Activated CD8-positive, alpha-beta memory T cell treated with anti-CD3 and anti-CD28 coated beads, Interleukin-2, amount 10 ng/mL, durations not matched to agents 7 days and 5 days (primary cell): ENCODE measurements at regions of chr18 and their contacts with region 1.

Region 1: GRCh38 chr18:11995445-11996189 is 14.3 kb downstream of the IMPA2 start:
- DNase-seq: peak; percentile 68
- ATAC-seq: peak; percentile 89
- H3K4me3 Mint-ChIP-seq: peak overlapping the region; percentile 22
- H3K27ac Mint-ChIP-seq: peak overlapping the region; percentile 39
- H3K4me1 Mint-ChIP-seq: peaks cover 23% of the 10 kb centered on the region
- H3K27me3 Mint-ChIP-seq: no peaks in the 10 kb centered on the region

Region 2: DNA sequence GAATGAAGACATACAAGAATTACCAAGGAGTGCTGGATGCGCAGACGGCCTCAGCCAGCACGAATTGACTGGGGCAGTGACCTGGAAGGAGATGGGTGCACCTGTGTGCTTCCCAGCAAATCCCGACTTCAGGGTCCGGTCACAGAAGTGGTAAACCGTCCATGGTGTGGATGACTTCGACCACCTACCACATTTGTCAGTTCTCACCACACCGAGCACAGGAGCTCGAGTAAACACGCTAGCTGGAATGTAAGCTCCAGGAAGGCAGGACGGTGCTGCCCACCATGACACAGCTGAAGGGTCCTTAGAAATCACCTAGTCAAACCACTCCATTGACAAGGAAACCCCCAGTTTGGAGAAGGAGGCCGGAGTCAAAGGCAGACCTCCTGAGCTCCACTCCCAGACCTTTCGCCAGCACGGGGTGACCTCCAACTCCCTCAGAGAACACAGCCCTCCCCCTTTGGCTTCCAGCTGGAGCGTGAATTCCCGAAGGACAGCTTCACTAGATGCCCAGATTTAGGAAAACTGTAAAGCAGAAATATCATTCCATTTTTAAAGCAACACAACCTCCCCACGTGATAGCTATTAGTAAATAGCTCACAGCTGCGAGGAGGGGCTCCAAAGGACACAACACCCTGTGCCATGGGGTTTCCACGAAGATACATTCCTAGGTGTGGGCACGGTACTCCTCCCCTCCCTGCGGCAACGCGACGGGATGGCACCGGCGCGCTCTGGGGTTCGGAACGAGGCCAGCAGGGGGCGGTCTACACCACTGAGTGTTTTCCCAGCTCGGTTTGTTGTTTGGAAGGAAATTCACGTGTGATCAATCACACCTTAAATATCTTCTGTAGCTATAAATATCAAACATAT is 340.6 kb before region 1 on chr18:
- CTCF ChIA-PET with region 1: interaction called, 11 read pairs
- DNase-seq: peak; percentile 51
- ATAC-seq: no peak
- H3K4me3 Mint-ChIP-seq: no peak overlapping the region
- H3K27ac Mint-ChIP-seq: no peak overlapping the region
- H3K4me1 Mint-ChIP-seq: no peaks in the 10 kb centered on the region
- H3K27me3 Mint-ChIP-seq: peaks cover 34% of the 10 kb centered on the region

Region 3: GRCh38 chr18:11733031-11733430 is 262.6 kb before region 1 on chr18:
- CTCF ChIA-PET with region 1: interaction called, 31 read pairs
- DNase-seq: peak; percentile 78
- ATAC-seq: peak; percentile 87
- H3K4me3 Mint-ChIP-seq: no peak overlapping the region
- H3K27ac Mint-ChIP-seq: no peak overlapping the region
- H3K4me1 Mint-ChIP-seq: no peaks in the 10 kb centered on the region
- H3K27me3 Mint-ChIP-seq: peaks cover 33% of the 10 kb centered on the region

Region 4: GRCh38 chr18:11925800-11926481 is 69.7 kb before region 1 on chr18:
- CTCF ChIA-PET with region 1: interaction called, 11 read pairs
- DNase-seq: no peak
- ATAC-seq: no peak
- H3K4me3 Mint-ChIP-seq: no peak overlapping the region
- H3K27ac Mint-ChIP-seq: no peak overlapping the region
- H3K4me1 Mint-ChIP-seq: peaks cover 15% of the 10 kb centered on the region
- H3K27me3 Mint-ChIP-seq: no peaks in the 10 kb centered on the region

Region 5: GRCh38 chr18:11937874-11938478 is 57.6 kb before region 1 on chr18:
- CTCF ChIA-PET with region 1: interaction called, 198 read pairs
- DNase-seq: peak; percentile 82
- ATAC-seq: peak; percentile 83
- H3K4me3 Mint-ChIP-seq: no peak overlapping the region
- H3K27ac Mint-ChIP-seq: no peak overlapping the region
- H3K4me1 Mint-ChIP-seq: peaks cover 2% of the 10 kb centered on the region
- H3K27me3 Mint-ChIP-seq: no peaks in the 10 kb centered on the region

Region 6: GRCh38 chr18:11947214-11948191 is 48.1 kb before region 1 on chr18:
- CTCF ChIA-PET with region 1: interaction called, 198 read pairs
- DNase-seq: peak; percentile 81
- ATAC-seq: peak; percentile 93
- H3K4me3 Mint-ChIP-seq: peak overlapping the region; percentile 72
- H3K27ac Mint-ChIP-seq: peak overlapping the region; percentile 76
- H3K4me1 Mint-ChIP-seq: peaks cover 13% of the 10 kb centered on the region
- H3K27me3 Mint-ChIP-seq: no peaks in the 10 kb centered on the region

Region 7: DNA sequence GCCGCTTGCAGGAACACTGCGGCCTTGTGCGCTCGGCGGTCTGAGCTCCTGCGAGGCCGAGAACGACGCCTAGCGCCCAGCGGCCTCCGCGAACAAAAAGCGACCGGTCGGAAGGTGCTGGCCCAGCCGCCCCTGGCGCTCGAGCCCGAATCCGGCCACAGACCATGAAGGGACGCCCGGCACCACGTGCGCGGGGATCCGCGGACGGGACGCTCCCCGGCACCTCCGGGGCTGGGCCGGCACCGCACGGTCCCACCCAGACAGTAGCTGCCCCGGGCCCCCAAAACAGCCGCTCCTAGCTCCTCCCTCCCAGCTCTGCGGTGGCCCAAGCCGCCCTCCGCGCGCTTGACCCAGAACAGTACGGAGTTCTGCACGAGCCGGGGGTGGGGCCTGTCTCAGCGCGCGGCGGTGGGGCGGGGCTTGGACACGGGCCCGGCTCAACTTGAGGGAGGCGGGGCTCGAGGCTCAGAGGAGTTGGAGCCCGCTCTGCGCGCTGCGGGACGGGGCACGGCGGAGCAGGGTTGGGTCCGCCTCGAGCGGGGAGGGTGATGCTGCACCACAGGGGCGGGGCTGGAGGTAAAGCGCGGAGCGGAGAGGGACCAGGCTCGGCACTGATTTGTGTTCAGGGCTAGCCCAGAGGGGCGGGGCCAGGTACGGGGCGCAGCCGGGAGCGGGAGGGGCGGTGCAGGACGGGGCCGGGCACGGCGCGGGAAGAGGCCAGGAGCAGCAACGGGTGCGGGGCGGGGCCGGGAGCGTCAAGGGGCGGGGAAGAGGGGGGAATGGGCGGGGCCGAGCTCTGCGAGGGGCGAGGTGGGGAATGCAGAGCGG is 14.8 kb before region 1 on chr18:
- CTCF ChIA-PET with region 1: interaction called, 15 read pairs
- DNase-seq: peak; percentile 98
- ATAC-seq: peak; percentile 93
- H3K4me3 Mint-ChIP-seq: peak overlapping the region; percentile 87
- H3K27ac Mint-ChIP-seq: peak overlapping the region; percentile 76
- H3K4me1 Mint-ChIP-seq: peaks cover 22% of the 10 kb centered on the region
- H3K27me3 Mint-ChIP-seq: peaks cover 3% of the 10 kb centered on the region